A673 (cell line): ENCODE measurements at regions of chr3 and their contacts with region 1.

Region 1: GRCh38 chr3:51371943-51372557 is 13.0 kb upstream of the MANF start:
- DNase-seq: peak; percentile 61
- H3K4me3 ChIP-seq: no peak overlapping the region
- H3K27ac ChIP-seq: no peak overlapping the region
- H3K4me1 ChIP-seq: no peaks in the 10 kb centered on the region
- H3K27me3 ChIP-seq: no peaks in the 10 kb centered on the region
- CTCF ChIP-seq: peak; percentile 51

Region 2: GRCh38 chr3:50622881-50623280 is 749.2 kb before region 1 on chr3:
- CTCF ChIA-PET with region 1: no interaction called
- POLR2A ChIA-PET with region 1: no interaction called
- intact Hi-C with region 1: no loop called
- DNase-seq: no peak
- H3K4me3 ChIP-seq: no peak overlapping the region
- H3K27ac ChIP-seq: no peak overlapping the region
- H3K4me1 ChIP-seq: peaks cover 7% of the 10 kb centered on the region
- H3K27me3 ChIP-seq: no peaks in the 10 kb centered on the region
- CTCF ChIP-seq: no peak

Region 3: DNA sequence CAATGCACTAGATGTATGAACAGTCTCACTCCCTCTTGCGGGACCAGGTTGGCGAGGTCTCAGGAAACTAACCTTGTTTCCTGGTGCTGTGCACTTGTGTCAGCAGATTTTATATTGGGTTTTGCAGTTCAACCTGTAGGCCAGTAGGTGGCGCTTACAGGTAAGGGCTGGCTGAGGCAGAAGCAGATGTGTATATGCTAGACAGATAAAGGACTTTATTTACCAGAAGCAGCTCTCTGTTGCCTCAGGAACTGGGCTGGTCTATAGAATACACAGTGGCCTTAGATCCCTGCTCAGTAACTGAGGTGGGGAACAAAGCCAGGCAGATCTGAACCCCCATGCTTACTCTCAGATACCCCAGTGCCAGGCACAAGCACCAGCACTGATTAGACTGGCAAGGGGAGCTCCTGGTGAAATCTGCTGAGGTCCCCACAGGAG is 400.5 kb before region 1 on chr3:
- CTCF ChIA-PET with region 1: interaction called, 3 read pairs
- POLR2A ChIA-PET with region 1: no interaction called
- intact Hi-C with region 1: loop called (anchors 2 kb)
- DNase-seq: peak; percentile 36
- H3K4me3 ChIP-seq: no peak overlapping the region
- H3K27ac ChIP-seq: no peak overlapping the region
- H3K4me1 ChIP-seq: no peaks in the 10 kb centered on the region
- H3K27me3 ChIP-seq: no peaks in the 10 kb centered on the region
- CTCF ChIP-seq: peak; percentile 70

Region 4: GRCh38 chr3:51099794-51100535 is 272.1 kb before region 1 on chr3:
- CTCF ChIA-PET with region 1: interaction called, 6 read pairs
- POLR2A ChIA-PET with region 1: no interaction called
- intact Hi-C with region 1: loop called (anchors 1 kb)
- DNase-seq: peak; percentile 51
- H3K4me3 ChIP-seq: no peak overlapping the region
- H3K27ac ChIP-seq: no peak overlapping the region
- H3K4me1 ChIP-seq: no peaks in the 10 kb centered on the region
- H3K27me3 ChIP-seq: no peaks in the 10 kb centered on the region
- CTCF ChIP-seq: peak; percentile 64